Left ventricle myocardium inferior (tissue), 1 donor: ENCODE measurements at regions of chr4 and their contacts with region 1.

Region 1: GRCh38 chr4:110005461-110006056 is 92.9 kb downstream of the EGF start:
- DNase-seq: no peak
- H3K4me3 ChIP-seq: no peak overlapping the region
- H3K27ac ChIP-seq: no peak overlapping the region
- H3K4me1 ChIP-seq: peaks cover 7% of the 10 kb centered on the region
- H3K27me3 ChIP-seq: no peaks in the 10 kb centered on the region
- CTCF ChIP-seq: peak; percentile 69

Region 2: GRCh38 chr4:109486007-109486406 is 519.6 kb before region 1 on chr4:
- intact Hi-C with region 1: no loop called
- DNase-seq: no peak
- H3K4me3 ChIP-seq: no peak overlapping the region
- H3K27ac ChIP-seq: no peak overlapping the region
- H3K4me1 ChIP-seq: peaks cover 25% of the 10 kb centered on the region
- H3K27me3 ChIP-seq: no peaks in the 10 kb centered on the region
- CTCF ChIP-seq: no peak

Region 3: GRCh38 chr4:109890076-109890475 is 115.5 kb before region 1 on chr4:
- intact Hi-C with region 1: no loop called
- DNase-seq: no peak
- H3K4me3 ChIP-seq: no peak overlapping the region
- H3K27ac ChIP-seq: no peak overlapping the region
- H3K4me1 ChIP-seq: no peaks in the 10 kb centered on the region
- H3K27me3 ChIP-seq: no peaks in the 10 kb centered on the region
- CTCF ChIP-seq: no peak

Region 4: DNA sequence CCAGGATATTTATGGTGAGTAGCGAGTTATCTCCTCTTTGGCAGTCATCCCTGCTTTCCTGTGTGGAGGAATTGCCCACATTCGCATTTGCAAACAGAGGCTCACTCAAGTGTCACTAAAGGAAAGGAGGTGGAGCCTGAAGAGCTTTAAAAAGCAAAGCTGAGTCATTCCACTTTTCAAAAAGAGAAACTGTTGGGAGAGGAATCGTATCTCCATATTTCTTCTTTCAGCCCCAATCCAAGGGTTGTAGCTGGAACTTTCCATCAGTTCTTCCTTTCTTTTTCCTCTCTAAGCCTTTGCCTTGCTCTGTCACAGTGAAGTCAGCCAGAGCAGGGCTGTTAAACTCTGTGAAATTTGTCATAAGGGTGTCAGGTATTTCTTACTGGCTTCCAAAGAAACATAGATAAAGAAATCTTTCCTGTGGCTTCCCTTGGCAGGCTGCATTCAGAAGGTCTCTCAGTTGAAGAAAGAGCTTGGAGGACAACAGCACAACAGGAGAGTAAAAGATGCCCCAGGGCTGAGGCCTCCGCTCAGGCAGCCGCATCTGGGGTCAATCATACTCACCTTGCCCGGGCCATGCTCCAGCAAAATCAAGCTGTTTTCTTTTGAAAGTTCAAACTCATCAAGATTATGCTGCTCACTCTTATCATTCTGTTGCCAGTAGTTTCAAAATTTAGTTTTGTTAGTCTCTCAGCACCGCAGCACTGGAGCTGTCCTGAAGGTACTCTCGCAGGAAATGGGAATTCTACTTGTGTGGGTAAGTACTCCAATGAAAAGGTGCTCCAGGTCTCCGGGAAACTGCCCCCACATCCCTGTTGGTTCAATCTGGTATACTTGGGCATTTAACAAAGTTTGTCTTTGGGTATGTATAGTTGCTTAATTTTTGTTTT is 92.6 kb before region 1 on chr4 and contains the start of gene EGF:
- intact Hi-C with region 1: no loop called
- DNase-seq: no peak
- H3K4me3 ChIP-seq: peak within 1 kb of the TSS; percentile 62
- H3K27ac ChIP-seq: peak within 1 kb of the TSS; percentile 77
- H3K4me1 ChIP-seq: peaks cover 17% of the 10 kb centered on the region
- H3K27me3 ChIP-seq: no peaks in the 10 kb centered on the region
- CTCF ChIP-seq: no peak
- total RNA-seq, gene EGF: 13.0 TPM

Region 5: DNA sequence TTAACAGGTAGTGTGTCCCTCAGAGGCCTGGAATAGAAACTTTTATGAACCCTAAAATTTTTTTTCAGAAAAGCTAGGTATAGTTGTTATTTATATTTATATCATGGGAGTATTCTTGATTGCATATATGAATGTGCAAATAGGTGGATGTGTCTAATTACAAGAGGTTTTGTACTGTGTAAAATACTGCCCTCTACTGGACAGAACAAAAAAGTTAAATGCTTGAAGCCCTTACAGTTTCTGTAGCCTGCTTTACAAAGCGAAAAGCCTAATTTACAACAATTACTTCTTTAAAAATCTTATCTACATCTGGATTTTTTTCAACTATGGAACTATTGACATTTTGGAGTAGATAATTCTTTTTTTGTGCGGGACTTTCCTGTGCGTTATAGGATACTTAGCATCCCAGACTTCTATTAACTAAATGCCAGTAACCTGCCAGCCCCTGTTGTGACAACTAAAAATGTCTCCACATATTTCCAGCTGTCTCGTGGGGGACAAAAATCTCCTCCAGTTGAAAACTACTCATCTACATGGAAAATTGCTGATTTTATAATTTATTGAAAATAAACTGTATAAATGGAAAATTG is 505.5 kb after region 1 on chr4:
- intact Hi-C with region 1: loop called (anchors 5 kb)
- DNase-seq: no peak
- H3K4me3 ChIP-seq: no peak overlapping the region
- H3K27ac ChIP-seq: no peak overlapping the region
- H3K4me1 ChIP-seq: peaks cover 6% of the 10 kb centered on the region
- H3K27me3 ChIP-seq: no peaks in the 10 kb centered on the region
- CTCF ChIP-seq: peak; percentile 78